ENCODE measurements at regions of chr6 and their contacts with region 1.

Region 1: GRCh38 chr6:5279891-5280338 is 18.6 kb downstream of the FARS2 start:
- DNase-seq: peak; percentile 69
- H3K4me3 Mint-ChIP-seq: no peak overlapping the region
- H3K27ac Mint-ChIP-seq: peak overlapping the region; percentile 83
- H3K4me1 Mint-ChIP-seq: peaks cover 37% of the 10 kb centered on the region
- H3K27me3 Mint-ChIP-seq: no peaks in the 10 kb centered on the region

Region 2: GRCh38 chr6:5085193-5085647 is 194.7 kb before region 1 on chr6 and contains the start of gene PPP1R3G:
- CTCF ChIA-PET with region 1: no interaction called
- intact Hi-C with region 1: no loop called
- DNase-seq: no peak
- H3K4me3 Mint-ChIP-seq: peak within 1 kb of the TSS; percentile 73
- H3K27ac Mint-ChIP-seq: no peak within 1 kb of the TSS
- H3K4me1 Mint-ChIP-seq: peaks cover 6% of the 10 kb centered on the region
- H3K27me3 Mint-ChIP-seq: peaks cover 46% of the 10 kb centered on the region
- total RNA-seq, gene PPP1R3G: not detected

Region 3: GRCh38 chr6:5199283-5199682 is 80.6 kb before region 1 on chr6:
- CTCF ChIA-PET with region 1: no interaction called
- intact Hi-C with region 1: loop called (anchors 1 kb)
- DNase-seq: no peak
- H3K4me3 Mint-ChIP-seq: no peak overlapping the region
- H3K27ac Mint-ChIP-seq: peak overlapping the region; percentile 5
- H3K4me1 Mint-ChIP-seq: peaks cover 14% of the 10 kb centered on the region
- H3K27me3 Mint-ChIP-seq: no peaks in the 10 kb centered on the region

Region 4: GRCh38 chr6:5302995-5303622 is 23.2 kb after region 1 on chr6:
- CTCF ChIA-PET with region 1: interaction called, 3 read pairs
- intact Hi-C with region 1: loop called (anchors 1 kb)
- DNase-seq: peak; percentile 73
- H3K4me3 Mint-ChIP-seq: no peak overlapping the region
- H3K27ac Mint-ChIP-seq: peak overlapping the region; percentile 59
- H3K4me1 Mint-ChIP-seq: peaks cover 36% of the 10 kb centered on the region
- H3K27me3 Mint-ChIP-seq: no peaks in the 10 kb centered on the region

Region 5: DNA sequence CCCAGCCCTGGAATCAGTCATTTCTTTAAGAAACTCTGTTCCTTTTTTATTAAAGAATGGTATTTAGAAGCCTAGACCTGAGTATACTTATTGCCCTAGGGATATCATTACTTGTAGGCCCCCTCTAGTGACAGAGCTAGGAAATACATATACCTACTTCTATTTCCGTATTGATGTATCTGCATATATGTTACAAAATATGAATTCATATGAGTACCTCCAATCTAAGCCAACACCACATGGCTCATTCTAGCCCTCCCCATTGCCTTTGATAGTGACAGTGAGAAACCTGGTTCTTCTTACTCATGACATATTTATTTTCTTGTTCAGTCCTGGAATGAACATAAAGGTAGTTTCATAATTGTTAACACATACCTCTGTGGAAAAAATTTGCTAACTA is 118.6 kb after region 1 on chr6:
- CTCF ChIA-PET with region 1: no interaction called
- intact Hi-C with region 1: loop called (anchors 1 kb)
- DNase-seq: peak; percentile 64
- H3K4me3 Mint-ChIP-seq: no peak overlapping the region
- H3K27ac Mint-ChIP-seq: no peak overlapping the region
- H3K4me1 Mint-ChIP-seq: peaks cover 22% of the 10 kb centered on the region
- H3K27me3 Mint-ChIP-seq: no peaks in the 10 kb centered on the region

Region 6: DNA sequence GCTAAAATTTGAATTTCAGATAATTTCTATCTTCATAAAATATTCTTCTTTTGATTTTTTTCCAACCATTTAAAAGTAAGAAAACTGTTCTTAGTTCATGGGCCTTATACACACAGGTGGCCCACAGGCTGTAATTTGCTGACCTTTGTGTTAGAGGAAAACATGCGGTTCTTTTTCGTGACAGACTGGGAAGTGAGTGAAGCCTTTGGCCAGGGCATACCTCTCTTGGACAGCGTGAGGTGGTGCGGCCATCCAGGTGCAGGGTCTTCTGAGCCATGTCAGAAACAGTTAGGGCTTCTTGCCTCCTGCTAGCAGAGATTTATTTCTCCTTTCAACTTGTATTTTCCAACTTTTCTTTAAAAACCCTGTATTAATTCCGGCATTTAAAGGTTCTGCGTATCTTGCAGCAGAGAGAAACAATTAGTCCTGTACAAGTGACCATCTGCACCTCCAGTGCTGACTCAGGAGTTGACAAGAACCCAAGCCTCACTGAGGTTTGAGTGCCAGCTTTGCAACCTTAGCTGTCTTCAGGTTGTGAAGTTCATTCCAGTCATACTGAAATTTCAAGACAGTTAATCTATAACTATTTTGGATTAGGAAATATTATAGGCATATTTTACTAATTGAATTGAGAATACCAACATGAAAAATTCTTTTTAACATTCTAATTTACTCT is 1486.5 kb after region 1 on chr6:
- CTCF ChIA-PET with region 1: no interaction called
- intact Hi-C with region 1: no loop called
- DNase-seq: no peak
- H3K4me3 Mint-ChIP-seq: no peak overlapping the region
- H3K27ac Mint-ChIP-seq: no peak overlapping the region
- H3K4me1 Mint-ChIP-seq: no peaks in the 10 kb centered on the region
- H3K27me3 Mint-ChIP-seq: no peaks in the 10 kb centered on the region